Activated CD8-positive, alpha-beta T cell treated with anti-CD3 and anti-CD28 coated beads for 36 hours (primary cell): ENCODE measurements at regions of chr18 and their contacts with region 1.

Region 1: GRCh38 chr18:79393635-79394533 is 1.8 kb upstream of the NFATC1 start:
- DNase-seq: peak; percentile 66
- ATAC-seq: peak; percentile 12
- H3K4me3 Mint-ChIP-seq: peak overlapping the region; percentile 76
- H3K27ac Mint-ChIP-seq: peak overlapping the region; percentile 84
- H3K4me1 Mint-ChIP-seq: peaks cover 18% of the 10 kb centered on the region
- H3K27me3 Mint-ChIP-seq: peaks cover 15% of the 10 kb centered on the region
- CTCF ChIP-seq: no peak

Region 2: DNA sequence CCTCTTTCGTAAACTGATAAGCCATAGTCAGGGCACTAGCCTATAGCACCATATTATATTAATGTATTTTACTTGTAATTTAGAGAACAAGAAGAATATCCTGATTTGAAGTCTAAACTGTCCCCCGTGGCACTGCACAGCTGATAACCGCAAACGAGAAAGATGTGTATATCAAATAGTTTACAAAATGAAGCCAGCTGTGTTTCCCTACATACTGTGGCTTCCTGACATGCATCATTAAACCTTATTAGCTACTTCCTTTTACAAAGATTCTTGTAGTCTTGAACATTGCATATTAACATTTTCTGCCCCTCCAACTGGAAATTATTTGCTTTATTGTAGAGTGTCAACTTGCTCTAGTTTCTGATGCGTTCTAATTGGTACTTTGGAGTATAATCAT is 151.6 kb before region 1 on chr18:
- CTCF ChIA-PET with region 1: no interaction called
- POLR2A ChIA-PET with region 1: no interaction called
- intact Hi-C with region 1: no loop called
- DNase-seq: no peak
- ATAC-seq: no peak
- H3K4me3 Mint-ChIP-seq: no peak overlapping the region
- H3K27ac Mint-ChIP-seq: no peak overlapping the region
- H3K4me1 Mint-ChIP-seq: peaks cover 2% of the 10 kb centered on the region
- H3K27me3 Mint-ChIP-seq: no peaks in the 10 kb centered on the region
- CTCF ChIP-seq: no peak

Region 3: DNA sequence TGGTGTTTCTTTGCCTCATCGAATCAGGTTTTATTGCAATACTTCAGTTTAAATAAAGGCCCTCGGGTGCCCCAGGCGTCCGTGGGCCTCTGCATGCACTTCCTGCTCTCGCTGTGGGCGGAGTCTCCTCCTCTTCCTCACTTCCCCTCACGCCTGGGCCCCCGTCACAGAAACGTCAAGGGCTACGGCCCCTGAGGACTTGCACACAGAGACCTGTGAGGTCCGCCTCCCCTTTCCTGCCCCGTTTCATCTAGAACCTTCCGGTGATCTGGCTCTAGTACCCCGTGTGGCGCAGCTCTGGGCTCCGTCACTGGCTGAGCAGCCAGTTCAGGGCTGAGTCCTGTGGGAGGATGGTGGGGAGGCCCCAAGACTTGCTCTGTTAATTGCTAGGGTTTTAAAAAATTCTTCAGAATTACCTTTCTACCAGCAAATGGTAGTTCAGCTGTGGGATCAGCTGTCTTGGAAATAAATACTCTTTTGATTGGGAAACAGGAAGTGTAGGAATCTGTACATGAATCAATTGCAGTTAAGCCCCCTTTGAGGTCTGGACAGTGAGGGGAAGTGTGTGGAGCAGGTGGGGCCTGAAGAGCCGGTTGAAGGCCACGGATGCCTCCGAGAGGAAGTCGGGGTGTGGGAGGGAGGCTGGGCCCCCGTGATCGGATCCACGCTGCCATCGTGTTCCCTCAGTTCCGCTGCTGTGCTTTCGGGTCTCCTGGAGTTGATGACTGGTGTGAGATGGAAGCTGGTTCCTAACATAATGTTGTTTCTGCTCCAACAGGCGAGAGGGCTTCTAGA is 12.1 kb after region 1 on chr18:
- CTCF ChIA-PET with region 1: no interaction called
- POLR2A ChIA-PET with region 1: interaction called, 11 read pairs
- intact Hi-C with region 1: no loop called
- DNase-seq: peak; percentile 96
- ATAC-seq: peak; percentile 90
- H3K4me3 Mint-ChIP-seq: peak overlapping the region; percentile 84
- H3K27ac Mint-ChIP-seq: peak overlapping the region; percentile 91
- H3K4me1 Mint-ChIP-seq: peaks cover 57% of the 10 kb centered on the region
- H3K27me3 Mint-ChIP-seq: no peaks in the 10 kb centered on the region
- CTCF ChIP-seq: no peak

Region 4: GRCh38 chr18:79422022-79422782 is 28.3 kb after region 1 on chr18:
- CTCF ChIA-PET with region 1: no interaction called
- POLR2A ChIA-PET with region 1: no interaction called
- intact Hi-C with region 1: no loop called
- DNase-seq: no peak
- ATAC-seq: peak; percentile 21
- H3K4me3 Mint-ChIP-seq: no peak overlapping the region
- H3K27ac Mint-ChIP-seq: no peak overlapping the region
- H3K4me1 Mint-ChIP-seq: peaks cover 32% of the 10 kb centered on the region
- H3K27me3 Mint-ChIP-seq: no peaks in the 10 kb centered on the region
- CTCF ChIP-seq: no peak

Region 5: GRCh38 chr18:79452190-79452990 is 58.5 kb after region 1 on chr18:
- CTCF ChIA-PET with region 1: no interaction called
- POLR2A ChIA-PET with region 1: no interaction called
- intact Hi-C with region 1: no loop called
- DNase-seq: no peak
- ATAC-seq: no peak
- H3K4me3 Mint-ChIP-seq: no peak overlapping the region
- H3K27ac Mint-ChIP-seq: no peak overlapping the region
- H3K4me1 Mint-ChIP-seq: peaks cover 3% of the 10 kb centered on the region
- H3K27me3 Mint-ChIP-seq: no peaks in the 10 kb centered on the region
- CTCF ChIP-seq: no peak

Region 6: DNA sequence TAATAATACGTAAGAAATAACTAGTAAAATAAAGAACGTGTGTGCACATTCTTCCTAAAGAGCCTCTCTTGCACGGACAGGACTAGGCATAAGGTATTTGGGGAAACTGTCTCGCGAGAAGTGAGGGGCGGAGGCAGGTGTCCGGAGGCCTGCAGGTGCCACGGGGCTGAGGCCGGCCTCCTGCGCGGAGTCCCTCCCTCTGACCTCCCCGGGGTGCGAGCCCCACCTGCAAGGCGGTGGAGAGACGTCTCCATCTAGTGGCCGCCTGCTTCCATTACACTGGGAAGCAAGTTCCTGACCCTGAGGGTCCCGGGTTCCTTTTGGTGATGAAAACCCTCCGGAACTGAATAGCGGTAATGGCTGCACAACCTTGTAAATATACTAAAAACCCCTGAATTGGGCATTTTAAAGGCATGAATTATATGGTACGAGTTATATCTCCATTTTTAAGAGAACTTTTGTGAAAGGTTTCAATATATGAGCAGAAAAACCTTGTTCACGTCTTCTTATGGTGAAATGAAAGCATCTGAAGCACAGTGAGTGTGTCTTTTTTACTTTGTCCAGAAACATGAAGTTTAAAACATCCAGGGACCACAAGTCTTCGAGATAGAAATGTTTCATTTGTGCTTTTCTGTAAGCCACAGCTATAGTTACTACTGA is 250.3 kb after region 1 on chr18:
- CTCF ChIA-PET with region 1: interaction called, 4 read pairs
- POLR2A ChIA-PET with region 1: no interaction called
- intact Hi-C with region 1: loop called (anchors 5 kb)
- DNase-seq: peak; percentile 81
- ATAC-seq: peak; percentile 95
- H3K4me3 Mint-ChIP-seq: no peak overlapping the region
- H3K27ac Mint-ChIP-seq: no peak overlapping the region
- H3K4me1 Mint-ChIP-seq: peaks cover 12% of the 10 kb centered on the region
- H3K27me3 Mint-ChIP-seq: peaks cover 5% of the 10 kb centered on the region
- CTCF ChIP-seq: peak; percentile 99